ENCODE measurements at regions of chr22 and their contacts with region 1.

Region 1: GRCh38 chr22:40177738-40178416 is at the start of gene TNRC6B:
- DNase-seq: peak in 41 of 42 donors; percentile 58 to 97 (median 85)

Region 2: GRCh38 chr22:39859903-39860588 is 317.8 kb before region 1 on chr22:
- intact Hi-C with region 1: no loop called
- DNase-seq: no peak

Region 3: DNA sequence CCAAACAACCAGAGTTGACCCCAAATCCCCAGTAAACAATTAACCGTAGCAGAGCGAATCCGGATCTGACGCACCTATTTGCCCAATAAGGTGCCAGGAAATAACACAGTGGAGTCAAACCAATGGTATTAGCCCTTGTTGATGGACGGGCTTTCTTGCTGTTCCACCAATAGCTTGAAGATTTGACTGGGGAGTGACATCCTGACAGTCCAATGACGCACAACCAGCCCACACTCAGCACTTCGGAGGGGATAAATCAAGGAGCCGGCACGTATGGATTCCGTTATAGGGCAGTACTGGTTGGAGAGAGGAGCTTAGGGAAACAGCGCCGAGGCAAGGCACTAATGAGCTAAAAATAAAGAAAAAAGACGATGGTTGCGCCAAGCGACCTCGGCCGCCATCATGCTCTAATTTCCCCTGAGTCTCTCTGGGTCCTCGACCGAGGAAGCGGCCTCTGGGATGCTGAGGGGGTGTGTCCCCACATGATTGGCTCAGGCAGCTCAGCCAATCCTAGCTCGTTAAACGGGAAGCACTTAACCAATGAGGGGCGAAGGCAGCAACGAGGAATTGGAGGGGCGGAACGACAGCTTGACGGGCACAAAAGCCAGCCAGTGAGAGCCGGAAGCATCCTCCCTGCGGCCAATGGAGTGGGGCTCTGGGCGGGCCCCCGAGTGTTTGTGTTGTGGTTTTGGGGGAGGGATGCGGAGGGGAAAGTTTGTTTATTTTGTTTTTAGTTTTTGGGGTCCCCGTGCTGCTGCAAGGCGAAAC is 133.6 kb before region 1 on chr22:
- intact Hi-C with region 1: loop called (anchors 5 kb)
- DNase-seq: peak; percentile 95 to 99 (median 98)

Region 4: GRCh38 chr22:40346178-40347118 is 168.6 kb after region 1 on chr22 and contains the start of gene ADSL:
- intact Hi-C with region 1: loop called (anchors 5 kb)
- DNase-seq: peak; percentile 73 to 96 (median 90)